Esophagus muscularis mucosa (tissue), 4 donors: ENCODE measurements at regions of chr3 and their contacts with region 1.

Region 1: GRCh38 chr3:122679085-122679881 is 1.4 kb upstream of the PARP14 start:
- DNase-seq: peak; percentile 98
- H3K4me3 ChIP-seq: peak overlapping the region; percentile 91 to 94 (median 93)
- H3K27ac ChIP-seq: peak overlapping the region; percentile 94 to 97 (median 94)
- H3K4me1 ChIP-seq: peaks cover 20 to 46% (median 38%) of the 10 kb centered on the region in 4 donors
- H3K27me3 ChIP-seq: no peaks in the 10 kb centered on the region
- CTCF ChIP-seq: peak; percentile 82 to 90 (median 83)
- EP300 ChIP-seq: no peak
- POLR2A ChIP-seq: no peak

Region 2: GRCh38 chr3:121545574-121546455 is 1133.5 kb before region 1 on chr3 and contains the start of gene POLQ:
- intact Hi-C with region 1: loop called (anchors 5 kb)
- DNase-seq: peak; percentile 96
- H3K4me3 ChIP-seq: peak within 1 kb of the TSS; percentile 57 to 64 (median 61)
- H3K27ac ChIP-seq: peak within 1 kb of the TSS; percentile 66 to 79 (median 74)
- H3K4me1 ChIP-seq: peaks cover 7 to 15% (median 9%) of the 10 kb centered on the region in 4 donors
- H3K27me3 ChIP-seq: no peaks in the 10 kb centered on the region
- CTCF ChIP-seq: no peak
- EP300 ChIP-seq: no peak
- POLR2A ChIP-seq: no peak
- total RNA-seq, gene POLQ: under 0.01 to 0.40 (median 0.15) TPM

Region 3: DNA sequence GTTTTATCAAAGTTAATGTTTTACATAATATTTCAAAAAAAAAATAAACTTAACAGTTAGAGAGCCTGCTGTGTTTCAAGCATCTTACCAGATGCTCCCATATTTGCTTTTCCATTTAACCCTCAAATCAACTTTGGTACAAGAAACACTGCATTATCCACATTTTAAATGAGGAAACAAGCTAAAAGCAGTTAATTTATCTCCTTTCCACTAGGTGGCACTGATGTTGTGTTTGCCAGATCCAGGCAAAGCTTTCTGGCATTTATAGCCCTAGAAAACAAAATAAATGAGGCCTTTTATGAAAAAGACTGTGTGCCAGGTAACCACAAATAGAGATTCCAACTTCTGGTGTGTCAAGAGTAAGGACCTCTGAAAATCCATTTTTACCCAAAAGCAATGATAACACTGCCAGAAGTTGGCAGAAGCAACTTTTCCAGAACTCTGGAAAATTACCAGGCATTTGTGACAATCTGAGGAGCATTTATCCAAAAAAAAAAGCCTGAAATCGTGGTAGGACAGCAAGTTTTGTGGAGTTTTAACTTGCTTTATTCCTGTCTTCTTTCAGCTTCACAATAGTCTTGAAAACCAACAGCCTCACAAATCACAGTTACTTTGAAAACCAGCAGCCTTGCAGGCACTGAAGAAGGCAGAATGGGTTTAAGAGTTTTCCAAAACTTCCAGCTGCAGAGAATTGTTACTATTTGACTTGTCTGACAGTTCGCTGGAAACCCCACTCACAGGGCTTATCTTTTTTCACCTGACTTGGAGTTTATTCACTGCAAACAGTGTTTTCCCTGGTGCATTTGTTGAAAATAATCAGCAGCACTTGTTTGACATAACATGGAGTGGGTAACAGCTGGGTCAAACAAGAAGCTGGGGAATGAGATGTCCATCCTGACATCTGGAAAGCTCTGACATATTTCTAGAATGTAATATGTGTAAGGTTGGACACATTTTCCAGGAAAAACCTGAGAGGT is 286.1 kb before region 1 on chr3:
- intact Hi-C with region 1: loop called (anchors 2 kb)
- DNase-seq: no peak
- H3K4me3 ChIP-seq: no peak overlapping the region
- H3K27ac ChIP-seq: peak overlapping the region in 3 of 4 donors; percentile 2 to 33 (median 11)
- H3K4me1 ChIP-seq: peaks cover 3 to 24% (median 22%) of the 10 kb centered on the region in 4 donors
- H3K27me3 ChIP-seq: no peaks in the 10 kb centered on the region
- CTCF ChIP-seq: peak; percentile 62 to 77 (median 65)
- EP300 ChIP-seq: no peak
- POLR2A ChIP-seq: no peak

Region 4: DNA sequence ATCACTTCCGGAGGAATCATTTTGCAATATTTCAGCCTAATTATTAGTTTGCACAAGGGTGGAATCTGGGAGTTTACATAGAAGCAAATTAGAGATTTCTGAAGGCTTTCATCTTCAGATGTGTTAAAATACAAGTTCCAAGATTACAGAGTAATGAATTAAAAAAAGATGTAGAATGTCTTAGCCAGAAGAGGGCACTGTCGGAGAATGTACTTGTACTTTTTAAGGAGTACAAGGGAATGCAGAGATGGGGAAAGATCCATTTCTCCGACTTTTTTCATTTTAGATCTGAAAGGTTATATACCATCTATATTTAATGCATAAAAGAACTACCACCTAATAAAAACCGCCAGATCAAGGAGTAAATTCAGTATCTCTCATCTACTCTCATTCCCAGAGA is 220.3 kb before region 1 on chr3:
- intact Hi-C with region 1: loop called (anchors 5 kb)
- DNase-seq: no peak
- H3K4me3 ChIP-seq: no peak overlapping the region
- H3K27ac ChIP-seq: no peak overlapping the region
- H3K4me1 ChIP-seq: no peaks in the 10 kb centered on the region
- H3K27me3 ChIP-seq: no peaks in the 10 kb centered on the region
- CTCF ChIP-seq: peak in 2 of 3 experiments; percentile 37 to 41
- EP300 ChIP-seq: no peak
- POLR2A ChIP-seq: no peak

Region 5: DNA sequence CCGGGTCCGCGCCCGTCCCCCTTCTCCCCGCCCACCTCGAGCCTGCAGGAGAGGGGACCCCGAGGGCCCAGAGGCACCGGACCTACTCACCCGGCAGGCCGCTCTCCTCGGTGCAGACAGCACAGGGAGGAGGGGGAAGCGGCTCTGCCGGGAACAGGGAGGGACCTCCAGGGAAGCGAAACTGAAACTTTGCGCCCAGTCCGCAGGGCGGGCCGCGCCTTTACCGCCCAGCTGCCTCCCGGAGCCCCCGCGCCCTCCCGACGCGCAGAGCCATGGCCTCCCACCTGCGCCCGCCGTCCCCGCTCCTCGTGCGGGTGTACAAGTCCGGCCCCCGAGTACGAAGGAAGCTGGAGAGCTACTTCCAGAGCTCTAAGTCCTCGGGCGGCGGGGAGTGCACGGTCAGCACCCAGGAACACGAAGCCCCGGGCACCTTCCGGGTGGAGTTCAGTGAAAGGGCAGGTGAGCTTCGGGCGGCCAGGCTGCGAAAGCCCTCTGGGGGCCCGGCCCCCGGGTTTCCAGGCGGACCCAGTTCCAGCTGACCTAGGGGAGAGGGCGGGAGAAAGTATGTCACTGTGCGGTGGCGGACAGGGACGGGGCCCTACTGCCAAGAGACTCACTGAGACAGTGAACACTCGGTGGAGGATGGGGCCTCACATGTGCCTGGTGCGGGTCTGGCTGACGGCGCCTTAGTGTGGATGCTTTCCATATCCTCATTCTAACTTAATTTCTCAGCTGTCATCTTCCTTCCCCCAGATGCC is 114.9 kb before region 1 on chr3 and contains the starts of genes DTX3L and PARP9:
- intact Hi-C with region 1: loop called (anchors 2 kb)
- DNase-seq: peak; percentile 96
- H3K4me3 ChIP-seq: peak within 1 kb of the TSS; percentile 75 to 93 (median 88)
- H3K27ac ChIP-seq: peak within 1 kb of the TSS; percentile 90 to 97 (median 95)
- H3K4me1 ChIP-seq: peaks cover 23 to 74% (median 59%) of the 10 kb centered on the region in 4 donors
- H3K27me3 ChIP-seq: no peaks in the 10 kb centered on the region
- CTCF ChIP-seq: no peak
- EP300 ChIP-seq: no peak
- POLR2A ChIP-seq: no peak
- total RNA-seq, gene DTX3L: 21.6 to 33.5 (median 21.8) TPM
- total RNA-seq, gene PARP9: 16.7 to 24.0 (median 21.3) TPM